ENCODE measurements at regions of chr19 and their contacts with region 1.

Region 1: GRCh38 chr19:12965017-12965811 is 4.2 kb upstream of the DAND5 start:
- DNase-seq: peak; percentile 87
- ATAC-seq: peak; percentile 96
- H3K4me3 Mint-ChIP-seq: peak overlapping the region; percentile 90
- H3K27ac Mint-ChIP-seq: peak overlapping the region; percentile 92
- H3K4me1 Mint-ChIP-seq: peaks cover 11% of the 10 kb centered on the region
- H3K27me3 Mint-ChIP-seq: no peaks in the 10 kb centered on the region
- CTCF ChIP-seq: peak; percentile 96

Region 2: GRCh38 chr19:12881172-12881808 is 83.9 kb before region 1 on chr19 and contains the start of gene DNASE2:
- CTCF ChIA-PET with region 1: interaction called, 67 read pairs
- POLR2A ChIA-PET with region 1: no interaction called
- intact Hi-C with region 1: no loop called
- DNase-seq: peak; percentile 96
- ATAC-seq: peak; percentile 73
- H3K4me3 Mint-ChIP-seq: peak within 1 kb of the TSS; percentile 90
- H3K27ac Mint-ChIP-seq: peak within 1 kb of the TSS; percentile 88
- H3K4me1 Mint-ChIP-seq: peaks cover 16% of the 10 kb centered on the region
- H3K27me3 Mint-ChIP-seq: no peaks in the 10 kb centered on the region
- CTCF ChIP-seq: no peak
- total RNA-seq, gene DNASE2: 22.3 to 26.1 TPM

Region 3: GRCh38 chr19:12918271-12918670 is 46.9 kb before region 1 on chr19:
- CTCF ChIA-PET with region 1: interaction called, 14 read pairs
- POLR2A ChIA-PET with region 1: interaction called, 4 read pairs
- intact Hi-C with region 1: no loop called
- DNase-seq: no peak
- ATAC-seq: no peak
- H3K4me3 Mint-ChIP-seq: peak overlapping the region; percentile 62
- H3K27ac Mint-ChIP-seq: peak overlapping the region; percentile 85
- H3K4me1 Mint-ChIP-seq: peaks cover 32% of the 10 kb centered on the region
- H3K27me3 Mint-ChIP-seq: no peaks in the 10 kb centered on the region
- CTCF ChIP-seq: no peak

Region 4: DNA sequence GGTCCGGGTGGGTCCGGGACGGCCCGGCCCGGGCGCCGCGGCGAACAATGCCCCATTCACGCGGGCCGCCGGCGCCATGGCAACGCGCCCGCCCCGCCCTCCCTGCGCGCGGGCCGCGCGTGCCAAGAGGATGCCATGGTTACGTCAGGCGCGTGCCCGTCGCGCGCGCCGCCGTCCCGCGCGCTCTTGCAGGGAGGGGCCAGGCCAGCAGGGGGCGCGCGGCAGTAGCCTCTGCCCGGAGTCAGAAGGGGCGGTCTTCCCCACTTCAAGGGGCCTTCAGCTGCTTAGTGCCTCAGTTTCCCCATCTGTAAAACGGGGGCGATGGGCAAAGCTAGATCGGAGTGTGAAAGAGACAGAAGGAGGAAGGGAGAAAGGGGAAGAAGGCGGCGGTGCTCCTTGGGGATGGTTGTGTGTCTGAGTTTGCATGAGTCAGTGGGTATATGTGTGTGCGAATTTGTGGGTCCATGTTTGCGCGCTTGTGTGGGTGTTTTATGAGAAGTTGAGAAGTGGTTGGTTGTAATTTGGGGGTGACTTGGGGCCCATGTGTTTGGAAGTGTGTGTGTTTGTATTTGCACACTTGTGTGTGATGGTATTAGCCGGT is 18.4 kb after region 1 on chr19:
- CTCF ChIA-PET with region 1: interaction called, 95 read pairs
- POLR2A ChIA-PET with region 1: interaction called, 3 read pairs
- intact Hi-C with region 1: no loop called
- DNase-seq: peak; percentile 85
- ATAC-seq: peak; percentile 89
- H3K4me3 Mint-ChIP-seq: no peak overlapping the region
- H3K27ac Mint-ChIP-seq: no peak overlapping the region
- H3K4me1 Mint-ChIP-seq: peaks cover 2% of the 10 kb centered on the region
- H3K27me3 Mint-ChIP-seq: peaks cover 4% of the 10 kb centered on the region
- CTCF ChIP-seq: peak; percentile 97

Region 5: GRCh38 chr19:13022859-13023636 is 57.8 kb after region 1 on chr19:
- CTCF ChIA-PET with region 1: interaction called, 39 read pairs
- POLR2A ChIA-PET with region 1: interaction called, 4 read pairs
- intact Hi-C with region 1: no loop called
- DNase-seq: peak; percentile 29
- ATAC-seq: peak; percentile 63
- H3K4me3 Mint-ChIP-seq: peak overlapping the region; percentile 64
- H3K27ac Mint-ChIP-seq: peak overlapping the region; percentile 12
- H3K4me1 Mint-ChIP-seq: peaks cover 18% of the 10 kb centered on the region
- H3K27me3 Mint-ChIP-seq: peaks cover 21% of the 10 kb centered on the region
- CTCF ChIP-seq: no peak

Region 6: GRCh38 chr19:13051267-13052165 is 86.3 kb after region 1 on chr19:
- CTCF ChIA-PET with region 1: interaction called, 21 read pairs
- POLR2A ChIA-PET with region 1: interaction called, 3 read pairs
- intact Hi-C with region 1: no loop called
- DNase-seq: peak; percentile 27
- ATAC-seq: peak; percentile 60
- H3K4me3 Mint-ChIP-seq: no peak overlapping the region
- H3K27ac Mint-ChIP-seq: no peak overlapping the region
- H3K4me1 Mint-ChIP-seq: peaks cover 11% of the 10 kb centered on the region
- H3K27me3 Mint-ChIP-seq: peaks cover 4% of the 10 kb centered on the region
- CTCF ChIP-seq: no peak

Region 7: DNA sequence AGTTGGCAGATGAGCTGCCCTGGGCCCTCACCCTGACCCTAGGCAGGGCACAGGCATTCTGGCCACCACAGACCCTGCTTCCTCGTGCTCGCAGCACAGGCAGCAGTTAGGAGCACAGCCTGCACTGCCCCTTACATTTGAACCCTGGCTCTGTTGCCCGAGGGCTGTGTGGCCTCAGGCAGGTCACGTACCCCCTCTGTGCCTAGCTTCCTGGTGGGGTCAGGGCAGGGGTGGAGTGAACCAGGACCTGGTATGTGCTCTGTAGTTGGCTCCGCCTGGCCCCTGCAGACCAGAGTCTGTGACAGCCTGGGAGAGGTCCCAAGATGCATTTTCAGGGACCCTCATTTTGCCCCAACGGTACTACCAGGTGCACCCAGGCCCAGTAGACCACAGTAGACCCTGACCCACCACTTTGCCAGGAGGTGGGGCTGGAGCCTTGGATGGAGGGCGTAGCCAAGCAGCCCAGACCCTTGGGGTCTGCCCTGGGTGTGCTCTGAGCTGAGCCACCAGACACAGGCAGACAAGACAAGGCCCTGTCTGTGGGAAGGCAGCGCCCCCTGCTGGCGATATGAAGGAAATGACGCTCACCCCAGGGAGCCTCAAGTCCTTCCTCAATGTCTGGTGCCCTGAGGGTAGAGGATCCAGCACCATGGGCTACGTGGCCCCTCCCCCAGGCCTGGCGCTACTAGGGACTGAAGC is 128.3 kb after region 1 on chr19:
- CTCF ChIA-PET with region 1: interaction called, 63 read pairs
- POLR2A ChIA-PET with region 1: interaction called, 5 read pairs
- intact Hi-C with region 1: no loop called
- DNase-seq: peak; percentile 91
- ATAC-seq: peak; percentile 84
- H3K4me3 Mint-ChIP-seq: no peak overlapping the region
- H3K27ac Mint-ChIP-seq: no peak overlapping the region
- H3K4me1 Mint-ChIP-seq: peaks cover 24% of the 10 kb centered on the region
- H3K27me3 Mint-ChIP-seq: peaks cover 26% of the 10 kb centered on the region
- CTCF ChIP-seq: peak; percentile 93